IMR-90 (cell line): ENCODE measurements at regions of chr1 and their contacts with region 1.

Region 1: DNA sequence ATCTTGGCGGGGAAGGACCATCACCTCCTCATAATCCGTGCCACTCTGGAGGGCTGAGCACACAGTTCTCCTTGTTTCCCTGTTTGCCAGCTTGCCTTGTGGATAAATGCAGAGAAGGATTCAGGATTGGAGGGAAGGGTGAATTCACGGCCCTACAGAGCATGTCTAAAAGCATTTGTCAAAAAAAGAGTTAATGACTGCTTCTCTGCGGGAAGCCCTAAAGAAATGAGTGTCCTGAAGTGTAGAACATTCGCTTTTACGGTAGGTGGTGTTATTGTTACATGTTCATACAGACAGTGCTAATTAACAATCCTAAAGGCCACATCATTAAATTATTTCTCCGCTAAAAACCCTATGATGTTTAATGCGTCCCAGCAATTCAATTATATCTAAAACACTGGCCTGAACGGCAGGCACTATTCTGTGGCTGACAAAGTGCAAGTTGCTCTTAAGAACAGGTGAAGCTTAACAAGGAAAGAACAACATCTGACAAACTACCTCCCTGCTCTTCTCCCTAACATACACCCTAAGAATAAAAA is 112.3 kb upstream of the NFIA start:
- DNase-seq: peak; percentile 23
- ATAC-seq: peak; percentile 67; the same call in 1 of the 2 replicates
- H3K4me3 ChIP-seq: no peak overlapping the region
- H3K27ac ChIP-seq: no peak overlapping the region
- H3K4me1 ChIP-seq: no peaks in the 10 kb centered on the region
- H3K27me3 ChIP-seq: no peaks in the 10 kb centered on the region; the same call in 1 of the 2 replicates
- CTCF ChIP-seq: peak; percentile 48
- POLR2A ChIP-seq: no peak
- RAD21 ChIP-seq: peak; percentile 49

Region 2: GRCh38 chr1:61043010-61043820 is 73.2 kb after region 1 on chr1:
- CTCF ChIA-PET with region 1: no interaction called
- POLR2A ChIA-PET with region 1: no interaction called
- dilution Hi-C with region 1: no loop called
- in situ Hi-C with region 1: no loop called
- intact Hi-C with region 1: loop called (anchors 2 kb)
- DNase-seq: peak; percentile 48
- ATAC-seq: peak; percentile 96
- H3K4me3 ChIP-seq: peak overlapping the region; percentile 30
- H3K27ac ChIP-seq: no peak overlapping the region
- H3K4me1 ChIP-seq: no peaks in the 10 kb centered on the region
- H3K27me3 ChIP-seq: peaks cover 17% of the 10 kb centered on the region
- CTCF ChIP-seq: peak; percentile 68
- POLR2A ChIP-seq: no peak
- RAD21 ChIP-seq: peak; percentile 74

Region 3: GRCh38 chr1:61588736-61589672 is 619.0 kb after region 1 on chr1:
- CTCF ChIA-PET with region 1: no interaction called
- POLR2A ChIA-PET with region 1: no interaction called
- dilution Hi-C with region 1: no loop called
- in situ Hi-C with region 1: no loop called
- intact Hi-C with region 1: loop called (anchors 2 kb)
- DNase-seq: peak; percentile 36
- ATAC-seq: peak; percentile 85
- H3K4me3 ChIP-seq: no peak overlapping the region
- H3K27ac ChIP-seq: no peak overlapping the region
- H3K4me1 ChIP-seq: no peaks in the 10 kb centered on the region
- H3K27me3 ChIP-seq: no peaks in the 10 kb centered on the region; the same call in 1 of the 2 replicates
- CTCF ChIP-seq: peak; percentile 63
- POLR2A ChIP-seq: no peak
- RAD21 ChIP-seq: peak; percentile 63

Region 4: GRCh38 chr1:61659061-61659460 is 689.0 kb after region 1 on chr1:
- CTCF ChIA-PET with region 1: no interaction called
- POLR2A ChIA-PET with region 1: no interaction called
- dilution Hi-C with region 1: no loop called
- in situ Hi-C with region 1: no loop called
- intact Hi-C with region 1: loop called (anchors 5 kb)
- DNase-seq: no peak
- ATAC-seq: no peak
- H3K4me3 ChIP-seq: no peak overlapping the region
- H3K27ac ChIP-seq: no peak overlapping the region
- H3K4me1 ChIP-seq: no peaks in the 10 kb centered on the region
- H3K27me3 ChIP-seq: no peaks in the 10 kb centered on the region
- CTCF ChIP-seq: no peak
- POLR2A ChIP-seq: no peak
- RAD21 ChIP-seq: no peak

Region 5: GRCh38 chr1:62070384-62071011 is 1100.5 kb after region 1 on chr1:
- CTCF ChIA-PET with region 1: no interaction called
- POLR2A ChIA-PET with region 1: no interaction called
- dilution Hi-C with region 1: no loop called
- in situ Hi-C with region 1: no loop called
- intact Hi-C with region 1: loop called (anchors 5 kb)
- DNase-seq: peak; percentile 13
- ATAC-seq: peak; percentile 56; the same call in 1 of the 2 replicates
- H3K4me3 ChIP-seq: no peak overlapping the region
- H3K27ac ChIP-seq: no peak overlapping the region
- H3K4me1 ChIP-seq: no peaks in the 10 kb centered on the region
- H3K27me3 ChIP-seq: no peaks in the 10 kb centered on the region
- CTCF ChIP-seq: peak; percentile 52
- POLR2A ChIP-seq: no peak
- RAD21 ChIP-seq: peak; percentile 45

Region 6: GRCh38 chr1:62144238-62144831 is 1174.3 kb after region 1 on chr1:
- CTCF ChIA-PET with region 1: no interaction called
- POLR2A ChIA-PET with region 1: no interaction called
- dilution Hi-C with region 1: no loop called
- in situ Hi-C with region 1: no loop called
- intact Hi-C with region 1: loop called (anchors 5 kb)
- DNase-seq: peak; percentile 52
- ATAC-seq: peak; percentile 84
- H3K4me3 ChIP-seq: no peak overlapping the region
- H3K27ac ChIP-seq: no peak overlapping the region
- H3K4me1 ChIP-seq: no peaks in the 10 kb centered on the region
- H3K27me3 ChIP-seq: no peaks in the 10 kb centered on the region
- CTCF ChIP-seq: peak; percentile 67
- POLR2A ChIP-seq: no peak
- RAD21 ChIP-seq: peak; percentile 56